ENCODE measurements at regions of chr6 and their contacts with region 1.

Region 1: GRCh38 chr6:24720604-24721460 is 1.9 kb upstream of the C6orf62 start:
- DNase-seq: peak; percentile 100

Region 2: GRCh38 chr6:24574809-24575208 is 146.0 kb before region 1 on chr6:
- intact Hi-C with region 1: no loop called
- DNase-seq: no peak

Region 3: DNA sequence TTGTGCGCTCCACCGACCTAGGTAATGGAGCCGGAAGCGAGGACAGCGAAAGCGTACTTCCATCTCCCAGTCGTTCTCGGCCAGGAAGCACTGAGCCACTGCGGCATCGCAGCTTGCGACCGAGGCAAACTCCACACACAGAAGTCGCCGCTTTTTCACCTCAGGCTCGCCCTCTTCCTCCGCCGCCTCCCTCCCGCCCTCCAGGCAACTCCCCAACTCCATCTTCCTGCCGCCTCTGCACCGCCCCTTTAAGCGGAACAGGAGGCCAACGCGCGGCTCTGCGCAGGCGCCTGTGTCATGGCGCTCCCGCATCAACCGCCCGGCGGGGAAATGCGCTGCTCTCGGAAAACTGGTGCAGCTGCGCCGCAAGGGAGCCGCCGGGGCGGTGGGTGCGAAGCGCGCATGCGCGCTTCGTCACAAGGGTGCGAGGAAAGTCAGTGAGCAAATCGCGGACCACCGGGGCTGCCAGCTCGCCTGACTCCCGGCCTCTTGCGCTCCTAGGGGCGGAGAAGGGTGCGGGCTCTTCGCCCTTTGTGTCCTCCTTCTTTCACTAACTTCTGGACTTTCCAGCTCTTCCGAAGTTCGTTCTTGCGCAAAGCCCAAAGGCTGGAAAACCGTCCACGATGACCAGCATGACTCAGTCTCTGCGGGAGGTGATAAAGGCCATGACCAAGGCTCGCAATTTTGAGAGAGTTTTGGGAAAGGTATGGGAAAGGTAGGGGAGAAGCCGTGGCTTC is 54.0 kb before region 1 on chr6 and contains the starts of genes ACOT13 and TDP2:
- intact Hi-C with region 1: loop called (anchors 2 kb)
- DNase-seq: peak; percentile 97
- total RNA-seq, gene ACOT13: 40.5 TPM
- total RNA-seq, gene TDP2: 24.1 TPM

Region 4: GRCh38 chr6:24774696-24775519 is 54.1 kb after region 1 on chr6 and contains the start of gene GMNN:
- intact Hi-C with region 1: loop called (anchors 2 kb)
- DNase-seq: peak; percentile 99
- total RNA-seq, gene GMNN: 3.7 TPM

Region 5: GRCh38 chr6:24933868-24934401 is 213.1 kb after region 1 on chr6:
- intact Hi-C with region 1: no loop called
- DNase-seq: no peak

Region 6: GRCh38 chr6:25156096-25156495 is 435.3 kb after region 1 on chr6:
- intact Hi-C with region 1: no loop called
- DNase-seq: no peak

Measured in cardiac septum (tissue), 1 donor.